Transverse colon (tissue), 4 donors: ENCODE measurements at regions of chr10 and their contacts with region 1.

Region 1: DNA sequence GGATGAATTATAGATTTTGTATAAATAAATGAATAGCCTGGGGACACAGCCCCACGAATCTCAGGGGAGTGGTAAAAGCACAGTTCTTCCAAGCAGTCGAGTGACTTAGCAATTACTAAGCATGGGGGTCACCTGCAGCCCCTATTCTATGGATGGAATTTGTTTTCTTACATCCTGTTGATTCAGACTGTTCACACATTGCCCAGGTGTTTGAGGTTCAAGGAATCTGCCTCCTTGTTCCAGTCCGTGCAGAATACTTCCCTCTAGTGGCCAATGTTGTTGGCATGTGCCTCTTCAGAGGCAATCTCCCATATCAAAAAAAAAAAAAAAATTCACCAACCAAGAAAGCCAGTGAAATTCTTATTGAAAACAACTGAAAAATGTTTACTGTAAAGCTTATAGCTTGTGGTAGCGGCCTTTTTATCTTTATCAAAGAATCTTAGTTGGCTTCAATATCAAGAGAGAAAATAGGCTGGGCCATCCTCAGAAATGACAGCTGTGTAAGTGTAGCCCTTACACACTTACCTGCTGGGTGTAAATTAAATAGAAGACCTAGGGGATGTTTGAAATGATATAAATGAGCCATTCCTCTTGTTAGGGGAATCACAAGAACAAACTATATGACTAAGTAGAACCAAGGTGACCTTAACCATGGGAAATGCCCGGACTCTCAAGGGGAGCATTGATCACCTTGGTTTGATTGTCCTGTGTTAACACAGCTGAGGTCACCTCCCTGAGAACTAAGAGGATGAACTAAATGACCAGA is 7.8 kb downstream of the LIPM start:
- DNase-seq: no peak
- H3K4me3 ChIP-seq: no peak overlapping the region
- H3K27ac ChIP-seq: no peak overlapping the region
- H3K4me1 ChIP-seq: no peaks in the 10 kb centered on the region
- H3K27me3 ChIP-seq: peaks cover 14% of the 10 kb centered on the region
- CTCF ChIP-seq: peak; percentile 49 to 66 (median 60)
- EP300 ChIP-seq: no peak
- POLR2A ChIP-seq: no peak

Region 2: DNA sequence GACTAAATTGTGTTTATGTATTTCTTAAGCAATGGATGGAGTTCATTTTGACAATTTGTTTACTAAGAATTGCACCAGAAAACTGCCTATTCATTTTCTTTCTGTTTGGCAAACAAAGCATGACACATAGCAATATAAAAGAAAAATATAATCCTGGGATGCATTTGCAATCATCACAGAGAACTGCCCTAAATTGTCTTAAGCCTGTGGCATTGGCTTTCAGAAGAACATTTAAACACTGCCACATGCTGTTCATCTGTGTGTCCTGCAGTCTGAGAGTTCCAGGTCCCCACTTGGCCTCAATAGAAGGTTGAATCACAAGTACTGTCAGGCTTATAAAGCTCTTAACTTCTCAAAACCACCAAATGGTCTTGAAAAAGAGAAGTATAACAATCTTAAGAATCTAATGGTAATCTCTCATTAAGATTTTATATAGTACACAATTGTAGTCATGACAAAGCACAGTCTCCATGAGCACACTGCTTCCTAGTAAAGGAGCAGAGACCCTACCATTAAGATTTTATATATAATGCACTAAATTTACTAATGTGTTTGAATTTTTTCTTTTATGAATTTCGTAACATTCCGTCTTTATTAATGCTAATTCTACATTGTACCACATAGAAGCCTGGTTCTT is 257.1 kb before region 1 on chr10:
- in situ Hi-C with region 1: loop called in 1 of 4 experiments (anchors 25 kb)
- intact Hi-C with region 1: no loop called
- DNase-seq: peak; percentile 41
- H3K4me3 ChIP-seq: no peak overlapping the region
- H3K27ac ChIP-seq: no peak overlapping the region
- H3K4me1 ChIP-seq: peaks cover 0 to 3% (median 0%) of the 10 kb centered on the region in 4 donors
- H3K27me3 ChIP-seq: no peaks in the 10 kb centered on the region
- CTCF ChIP-seq: peak; percentile 63 to 79 (median 75)
- EP300 ChIP-seq: no peak
- POLR2A ChIP-seq: no peak

Region 3: GRCh38 chr10:88687853-88688467 is 122.4 kb before region 1 on chr10:
- in situ Hi-C with region 1: loop called in 2 of 4 experiments (anchors 10 kb)
- intact Hi-C with region 1: no loop called
- DNase-seq: no peak
- H3K4me3 ChIP-seq: no peak overlapping the region
- H3K27ac ChIP-seq: no peak overlapping the region
- H3K4me1 ChIP-seq: no peaks in the 10 kb centered on the region
- H3K27me3 ChIP-seq: peaks cover 3% of the 10 kb centered on the region
- CTCF ChIP-seq: peak; percentile 60 to 72 (median 65)
- EP300 ChIP-seq: no peak
- POLR2A ChIP-seq: no peak